Common myeloid progenitor, CD34-positive (primary cell): ENCODE measurements at regions of chr7 and their contacts with region 1.

Region 1: GRCh38 chr7:80918909-80919662 is at the start of gene SEMA3C:
- DNase-seq: peak; percentile 72 to 85 (median 79)
- H3K4me3 ChIP-seq: peak within 1 kb of the TSS; percentile 52 to 96 (median 83)
- H3K27ac ChIP-seq: no peak within 1 kb of the TSS
- H3K4me1 ChIP-seq: peaks cover 7 to 29% (median 20%) of the 10 kb centered on the region in 4 experiments
- H3K27me3 ChIP-seq: no peaks in the 10 kb centered on the region

Region 2: DNA sequence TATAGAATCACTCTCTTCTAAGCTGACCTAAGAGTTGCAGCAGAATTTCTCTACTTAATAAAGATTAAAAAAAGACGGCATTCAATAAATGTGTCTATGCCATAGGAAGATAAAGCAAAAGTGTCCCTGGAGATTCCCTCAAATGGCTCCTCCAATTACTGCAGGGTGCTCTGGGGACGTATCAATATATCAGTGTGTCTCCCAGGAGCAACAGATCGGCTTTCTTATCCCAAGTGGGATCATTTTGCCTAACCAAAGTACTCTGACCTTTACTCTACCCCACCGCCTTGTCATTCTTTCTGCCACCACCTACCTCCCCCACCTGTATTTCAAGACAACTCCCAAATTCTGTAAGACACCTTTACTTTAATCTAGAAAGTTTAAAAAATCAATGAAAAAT is 201.7 kb after region 1 on chr7:
- CTCF ChIA-PET with region 1: no interaction called
- POLR2A ChIA-PET with region 1: no interaction called
- DNase-seq: no peak
- H3K4me3 ChIP-seq: no peak overlapping the region
- H3K27ac ChIP-seq: no peak overlapping the region
- H3K4me1 ChIP-seq: peaks cover 0 to 2% (median 0%) of the 10 kb centered on the region in 4 experiments
- H3K27me3 ChIP-seq: no peaks in the 10 kb centered on the region

Region 3: DNA sequence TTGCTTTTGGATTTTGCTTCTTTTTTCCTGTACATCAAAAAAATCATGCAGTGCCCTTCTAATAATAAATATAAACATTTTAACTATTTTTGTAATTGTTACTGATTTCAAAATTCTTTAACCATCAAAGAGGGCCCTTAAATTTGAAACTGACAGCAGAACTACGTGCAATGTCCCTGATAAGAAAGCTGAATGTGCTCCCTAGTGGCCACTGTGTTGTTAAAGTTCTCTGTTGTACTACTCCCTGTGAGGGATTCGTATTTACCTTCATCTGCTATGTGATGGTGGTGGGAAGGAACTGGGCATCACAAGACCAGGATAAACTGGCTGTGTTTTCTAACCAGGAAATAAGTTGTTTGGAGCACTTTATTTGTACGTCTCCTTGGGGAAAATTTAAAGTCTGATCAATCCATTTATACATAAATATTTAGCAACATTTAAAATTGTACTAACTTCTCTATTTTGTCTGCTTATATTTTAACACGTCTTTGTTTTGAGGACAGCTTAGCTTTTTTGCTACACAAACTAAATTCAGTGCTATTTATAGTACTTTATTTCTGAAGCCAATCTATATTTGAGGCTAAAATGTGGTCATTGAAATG is 528.4 kb after region 1 on chr7:
- CTCF ChIA-PET with region 1: interaction called, 16 read pairs
- POLR2A ChIA-PET with region 1: no interaction called
- DNase-seq: peak; percentile 60 to 63 (median 61)
- H3K4me3 ChIP-seq: no peak overlapping the region
- H3K27ac ChIP-seq: no peak overlapping the region
- H3K4me1 ChIP-seq: peaks cover 0 to 2% (median 0%) of the 10 kb centered on the region in 4 experiments
- H3K27me3 ChIP-seq: no peaks in the 10 kb centered on the region

Region 4: DNA sequence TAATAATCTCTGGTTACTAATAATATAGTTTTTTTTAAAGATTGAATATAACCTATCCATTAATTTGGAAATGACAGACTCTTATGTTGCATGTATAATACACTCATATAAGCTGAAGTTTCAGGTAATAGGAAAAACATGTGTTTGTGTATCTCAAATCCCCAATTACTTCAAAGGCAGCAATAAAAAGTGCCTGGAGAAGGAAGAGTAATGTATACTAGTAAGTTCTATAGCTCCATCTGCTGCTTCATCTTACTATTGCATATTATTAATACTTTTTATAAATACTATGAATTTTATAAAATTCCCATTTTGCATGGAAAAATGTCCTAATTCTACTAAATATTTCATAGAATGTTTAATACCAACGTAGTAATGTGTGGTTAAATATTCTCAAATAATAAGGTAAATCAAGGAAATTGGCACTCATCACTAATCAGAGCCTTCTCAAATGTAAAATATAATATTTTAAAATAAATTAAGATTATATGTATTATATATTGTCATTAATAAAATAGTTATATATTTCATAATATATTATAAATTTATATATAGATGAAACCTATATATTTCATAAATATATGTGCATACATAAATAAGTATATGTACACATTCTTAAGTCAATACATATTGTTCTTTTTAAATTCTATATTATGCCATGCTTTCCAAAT is 538.9 kb after region 1 on chr7:
- CTCF ChIA-PET with region 1: interaction called, 15 read pairs
- POLR2A ChIA-PET with region 1: no interaction called
- DNase-seq: peak in 2 of 3 donors; percentile 39 to 42
- H3K4me3 ChIP-seq: no peak overlapping the region
- H3K27ac ChIP-seq: no peak overlapping the region
- H3K4me1 ChIP-seq: peaks cover 3 to 18% (median 13%) of the 10 kb centered on the region in 4 experiments
- H3K27me3 ChIP-seq: no peaks in the 10 kb centered on the region